MCF 10A (cell line): ENCODE measurements at regions of chr15 and their contacts with region 1.

Region 1: GRCh38 chr15:70466895-70467529 is 296.3 kb downstream of the UACA start:
- DNase-seq: peak; percentile 71
- H3K4me3 Mint-ChIP-seq: no peak overlapping the region
- H3K27ac Mint-ChIP-seq: no peak overlapping the region
- H3K4me1 Mint-ChIP-seq: peaks cover 6% of the 10 kb centered on the region
- H3K27me3 Mint-ChIP-seq: peaks cover 11% of the 10 kb centered on the region
- CTCF ChIP-seq: peak; percentile 68

Region 2: GRCh38 chr15:70293591-70294470 is 173.2 kb before region 1 on chr15:
- CTCF ChIA-PET with region 1: no interaction called
- POLR2A ChIA-PET with region 1: no interaction called
- intact Hi-C with region 1: no loop called
- DNase-seq: no peak
- H3K4me3 Mint-ChIP-seq: no peak overlapping the region
- H3K27ac Mint-ChIP-seq: no peak overlapping the region
- H3K4me1 Mint-ChIP-seq: peaks cover 11% of the 10 kb centered on the region
- H3K27me3 Mint-ChIP-seq: no peaks in the 10 kb centered on the region
- CTCF ChIP-seq: no peak

Region 3: GRCh38 chr15:70400766-70401541 is 66.1 kb before region 1 on chr15:
- CTCF ChIA-PET with region 1: no interaction called
- POLR2A ChIA-PET with region 1: no interaction called
- intact Hi-C with region 1: no loop called
- DNase-seq: no peak
- H3K4me3 Mint-ChIP-seq: no peak overlapping the region
- H3K27ac Mint-ChIP-seq: no peak overlapping the region
- H3K4me1 Mint-ChIP-seq: no peaks in the 10 kb centered on the region
- H3K27me3 Mint-ChIP-seq: peaks cover 36% of the 10 kb centered on the region
- CTCF ChIP-seq: no peak

Region 4: DNA sequence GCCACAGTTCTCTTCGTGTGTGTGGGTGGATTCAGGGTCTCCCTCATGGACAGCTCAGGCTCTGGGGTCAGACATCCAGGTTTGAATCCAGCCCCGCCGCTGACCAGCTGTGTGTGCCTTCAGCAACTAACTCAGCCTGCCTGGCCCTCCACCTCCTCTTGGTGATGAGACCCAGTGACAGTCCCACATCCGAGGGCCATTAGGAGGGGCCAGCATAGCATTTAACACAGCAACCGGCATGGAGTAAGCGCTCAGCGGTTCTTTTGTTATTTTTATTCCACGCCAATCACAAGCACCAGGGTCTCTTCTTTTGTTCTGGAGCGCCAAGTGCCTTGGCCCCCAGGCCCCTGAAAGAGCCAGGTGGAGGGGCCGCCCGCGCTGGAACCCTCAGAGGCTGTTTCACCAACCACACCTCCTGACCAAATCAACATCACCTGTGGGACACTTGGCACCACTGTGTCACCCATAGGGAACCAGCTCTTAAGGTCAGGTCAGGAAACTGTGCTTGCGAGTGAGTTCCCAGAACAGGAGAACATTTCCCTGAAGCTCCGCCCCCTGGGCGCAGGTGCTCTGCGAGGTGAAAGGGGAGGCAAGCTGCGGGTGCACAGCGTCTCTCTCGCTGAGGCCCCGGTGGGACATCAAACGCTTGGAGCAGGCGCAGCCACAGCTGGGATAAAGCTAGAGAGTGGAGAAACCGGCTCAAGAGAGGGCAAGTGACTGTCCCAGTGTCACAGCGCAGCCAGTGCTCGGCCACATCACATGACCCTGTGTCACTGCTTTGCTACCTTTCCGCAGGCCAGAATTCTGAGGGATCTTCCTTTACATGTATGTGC is 15.0 kb before region 1 on chr15:
- CTCF ChIA-PET with region 1: interaction called, 15 read pairs
- POLR2A ChIA-PET with region 1: interaction called, 3 read pairs
- intact Hi-C with region 1: no loop called
- DNase-seq: no peak
- H3K4me3 Mint-ChIP-seq: no peak overlapping the region
- H3K27ac Mint-ChIP-seq: no peak overlapping the region
- H3K4me1 Mint-ChIP-seq: no peaks in the 10 kb centered on the region
- H3K27me3 Mint-ChIP-seq: no peaks in the 10 kb centered on the region
- CTCF ChIP-seq: no peak